Activated T-helper 1 cell treated with anti-CD3 and anti-CD28 coated beads, Interleukin-12 subunit alpha, Interleukin-12 subunit beta, Interleukin-2, Interleukin-4 antibody, amounts not matched to agents 30 ng/mL and 10 ng/mL and 1 ng/mL, durations not matched to agents 14 hours and 24 hours and 36 hours (primary cell): ENCODE measurements at regions of chr6 and their contacts with region 1.

Region 1: GRCh38 chr6:90406142-90406794 is 109.6 kb upstream of the BACH2 start:
- DNase-seq: peak; percentile 26
- H3K4me3 Mint-ChIP-seq: peak overlapping the region; percentile 3
- H3K27ac Mint-ChIP-seq: peak overlapping the region; percentile 79
- H3K4me1 Mint-ChIP-seq: peaks cover 73% of the 10 kb centered on the region
- H3K27me3 Mint-ChIP-seq: peaks cover 4% of the 10 kb centered on the region

Region 2: GRCh38 chr6:90458353-90459224 is 52.3 kb after region 1 on chr6:
- intact Hi-C with region 1: loop called (anchors 1 kb)
- DNase-seq: peak; percentile 66
- H3K4me3 Mint-ChIP-seq: peak overlapping the region; percentile 47
- H3K27ac Mint-ChIP-seq: peak overlapping the region; percentile 93
- H3K4me1 Mint-ChIP-seq: peaks cover 65% of the 10 kb centered on the region
- H3K27me3 Mint-ChIP-seq: no peaks in the 10 kb centered on the region